Common myeloid progenitor, CD34-positive (primary cell): ENCODE measurements at regions of chr6 and their contacts with region 1.

Region 1: GRCh38 chr6:165439928-165440554 is 130.6 kb upstream of the C6orf118 start:
- DNase-seq: peak; percentile 63 to 71 (median 65)
- H3K4me3 ChIP-seq: no peak overlapping the region
- H3K27ac ChIP-seq: no peak overlapping the region
- H3K4me1 ChIP-seq: no peaks in the 10 kb centered on the region
- H3K27me3 ChIP-seq: peaks cover 0 to 4% (median 0%) of the 10 kb centered on the region in 5 experiments

Region 2: GRCh38 chr6:165456286-165456685 is 16.2 kb after region 1 on chr6:
- CTCF ChIA-PET with region 1: interaction called, 10 read pairs
- POLR2A ChIA-PET with region 1: no interaction called
- DNase-seq: no peak
- H3K4me3 ChIP-seq: no peak overlapping the region
- H3K27ac ChIP-seq: no peak overlapping the region
- H3K4me1 ChIP-seq: no peaks in the 10 kb centered on the region
- H3K27me3 ChIP-seq: peaks cover 0 to 5% (median 0%) of the 10 kb centered on the region in 5 experiments

Region 3: GRCh38 chr6:165850434-165851019 is 410.5 kb after region 1 on chr6:
- CTCF ChIA-PET with region 1: interaction called, 23 read pairs
- POLR2A ChIA-PET with region 1: interaction called, 3 read pairs
- DNase-seq: peak; percentile 52 to 74 (median 70)
- H3K4me3 ChIP-seq: no peak overlapping the region
- H3K27ac ChIP-seq: no peak overlapping the region
- H3K4me1 ChIP-seq: peaks cover 0 to under 1% (median 0%) of the 10 kb centered on the region in 4 experiments
- H3K27me3 ChIP-seq: peaks cover 19 to 98% (median 53%) of the 10 kb centered on the region in 5 experiments